ENCODE measurements at regions of chr19 and their contacts with region 1.

Region 1: DNA sequence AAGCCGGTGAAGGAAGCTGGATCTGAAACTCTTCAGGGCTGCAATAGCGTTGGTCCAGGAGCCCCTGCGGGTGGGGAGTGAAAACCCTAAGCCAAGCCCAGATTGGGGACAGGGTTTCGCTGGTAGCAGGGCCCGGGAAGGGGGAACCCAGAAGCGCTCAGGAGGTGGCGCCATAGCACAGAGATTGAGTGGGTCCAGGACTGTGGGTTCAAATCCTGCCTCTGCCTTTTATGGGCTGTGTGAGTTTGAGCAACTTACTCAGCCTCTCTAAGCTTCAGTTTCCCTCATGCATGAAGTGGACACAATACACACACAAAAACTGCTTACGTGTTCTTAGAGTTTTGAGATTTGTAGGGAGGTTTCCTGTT is 8.3 kb upstream of the SYCN start:
- DNase-seq: peak in 1 of 2 experiments; percentile 76
- ATAC-seq: peak; percentile 90
- H3K4me3 ChIP-seq: no peak overlapping the region
- H3K27ac ChIP-seq: no peak overlapping the region
- H3K4me1 ChIP-seq: no peaks in the 10 kb centered on the region
- CTCF ChIP-seq: peak; percentile 84
- EP300 ChIP-seq: no peak
- POLR2A ChIP-seq: no peak
- RAD21 ChIP-seq: peak; percentile 93 to 98

Region 2: GRCh38 chr19:39199025-39199424 is 13.3 kb before region 1 on chr19:
- CTCF ChIA-PET with region 1: interaction called, 39 read pairs
- POLR2A ChIA-PET with region 1: no interaction called
- DNase-seq: no peak
- ATAC-seq: peak in 1 of 2 experiments; percentile 40; a peak in 3 of 6 replicates
- H3K4me3 ChIP-seq: no peak overlapping the region
- H3K27ac ChIP-seq: peak overlapping the region in 1 of 2 experiments; percentile 13; a peak in 2 of 6 replicates
- H3K4me1 ChIP-seq: peaks cover 29% of the 10 kb centered on the region
- CTCF ChIP-seq: no peak
- EP300 ChIP-seq: no peak
- POLR2A ChIP-seq: no peak
- RAD21 ChIP-seq: no peak

Region 3: DNA sequence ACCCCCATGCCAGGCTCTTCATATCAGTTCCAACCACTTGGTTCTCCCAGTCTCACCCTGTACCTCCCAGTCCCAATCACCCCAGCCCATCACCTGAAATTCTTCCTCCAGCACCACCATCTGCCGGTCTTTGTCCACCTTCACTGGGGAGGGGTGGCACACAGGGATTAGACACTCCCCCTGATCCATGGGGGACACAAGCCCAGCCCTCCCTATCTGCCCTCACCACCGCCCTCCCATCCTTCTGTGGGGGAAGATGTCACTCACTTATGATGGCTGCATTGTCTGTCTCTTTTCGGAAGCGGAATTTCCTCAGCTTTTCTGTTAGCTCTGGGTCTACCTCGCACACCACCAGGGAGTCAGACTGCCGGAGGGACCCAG is 122.8 kb after region 1 on chr19:
- CTCF ChIA-PET with region 1: interaction called, 12 read pairs
- POLR2A ChIA-PET with region 1: no interaction called
- DNase-seq: no peak
- ATAC-seq: peak; percentile 8 to 33
- H3K4me3 ChIP-seq: no peak overlapping the region
- H3K27ac ChIP-seq: no peak overlapping the region
- H3K4me1 ChIP-seq: peaks cover 9% of the 10 kb centered on the region; the same call in 1 of the 3 replicates
- CTCF ChIP-seq: no peak
- EP300 ChIP-seq: no peak
- POLR2A ChIP-seq: no peak
- RAD21 ChIP-seq: no peak

Measured in A549 (cell line).